Activated T-helper 2 cell treated with anti-CD3 and anti-CD28 coated beads, Interferon-gamma antibody, Interleukin-2, Interleukin-4, amounts not matched to agents 10 μg/mL and 5 μg/mL and 100 μg/mL, durations not matched to agents 14 hours and 24 hours and 36 hours (primary cell): ENCODE measurements at regions of chr11 and their contacts with region 1.

Region 1: GRCh38 chr11:86740709-86741483 is 59.4 kb upstream of the PRSS23 start:
- DNase-seq: no peak
- H3K4me3 Mint-ChIP-seq: no peak overlapping the region
- H3K27ac Mint-ChIP-seq: no peak overlapping the region
- H3K4me1 Mint-ChIP-seq: peaks cover 27% of the 10 kb centered on the region
- H3K27me3 Mint-ChIP-seq: no peaks in the 10 kb centered on the region

Region 2: DNA sequence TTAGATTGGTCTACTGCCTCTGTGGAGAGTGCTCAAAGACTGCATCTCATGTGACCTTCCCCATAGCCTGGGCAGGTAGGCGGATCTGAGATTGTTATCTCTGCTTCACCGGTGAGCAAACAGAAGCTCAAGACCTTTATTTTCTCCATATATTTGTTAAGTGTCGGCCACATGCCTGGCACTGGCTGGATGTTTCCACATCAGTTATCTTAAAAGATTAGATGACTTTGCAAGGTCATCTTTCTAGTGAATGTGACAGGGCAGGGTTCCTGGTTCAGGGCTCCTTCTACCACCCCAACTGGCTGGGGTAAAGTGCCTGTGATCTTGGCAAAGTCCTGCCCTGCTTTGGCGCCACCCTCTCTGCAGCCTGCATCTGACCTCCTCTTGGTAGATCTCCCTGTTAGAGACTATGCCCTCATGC is 241.2 kb before region 1 on chr11:
- intact Hi-C with region 1: loop called (anchors 5 kb)
- DNase-seq: no peak
- H3K4me3 Mint-ChIP-seq: no peak overlapping the region
- H3K27ac Mint-ChIP-seq: no peak overlapping the region
- H3K4me1 Mint-ChIP-seq: peaks cover 11% of the 10 kb centered on the region
- H3K27me3 Mint-ChIP-seq: peaks cover 4% of the 10 kb centered on the region

Region 3: DNA sequence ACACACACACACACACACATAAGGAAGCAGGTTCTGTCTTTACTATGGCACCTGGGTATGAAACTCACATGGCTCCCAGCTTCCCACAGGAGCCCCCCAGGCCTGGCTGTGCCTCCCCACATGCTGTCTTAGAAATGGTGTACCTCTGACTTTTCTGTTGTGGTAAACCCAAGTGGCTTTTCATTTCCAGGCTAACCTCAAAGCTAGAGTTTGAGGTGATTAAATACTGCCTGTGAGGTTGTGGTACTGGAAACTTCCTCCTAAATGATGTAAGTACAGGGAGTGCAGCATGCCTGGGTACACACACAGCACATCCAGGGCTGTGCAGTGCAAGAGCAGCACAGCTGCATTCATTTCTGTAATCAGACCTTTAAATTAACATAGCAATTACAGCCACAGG is 102.9 kb before region 1 on chr11:
- intact Hi-C with region 1: loop called (anchors 5 kb)
- DNase-seq: no peak
- H3K4me3 Mint-ChIP-seq: no peak overlapping the region
- H3K27ac Mint-ChIP-seq: no peak overlapping the region
- H3K4me1 Mint-ChIP-seq: peaks cover 21% of the 10 kb centered on the region
- H3K27me3 Mint-ChIP-seq: peaks cover 41% of the 10 kb centered on the region

Region 4: DNA sequence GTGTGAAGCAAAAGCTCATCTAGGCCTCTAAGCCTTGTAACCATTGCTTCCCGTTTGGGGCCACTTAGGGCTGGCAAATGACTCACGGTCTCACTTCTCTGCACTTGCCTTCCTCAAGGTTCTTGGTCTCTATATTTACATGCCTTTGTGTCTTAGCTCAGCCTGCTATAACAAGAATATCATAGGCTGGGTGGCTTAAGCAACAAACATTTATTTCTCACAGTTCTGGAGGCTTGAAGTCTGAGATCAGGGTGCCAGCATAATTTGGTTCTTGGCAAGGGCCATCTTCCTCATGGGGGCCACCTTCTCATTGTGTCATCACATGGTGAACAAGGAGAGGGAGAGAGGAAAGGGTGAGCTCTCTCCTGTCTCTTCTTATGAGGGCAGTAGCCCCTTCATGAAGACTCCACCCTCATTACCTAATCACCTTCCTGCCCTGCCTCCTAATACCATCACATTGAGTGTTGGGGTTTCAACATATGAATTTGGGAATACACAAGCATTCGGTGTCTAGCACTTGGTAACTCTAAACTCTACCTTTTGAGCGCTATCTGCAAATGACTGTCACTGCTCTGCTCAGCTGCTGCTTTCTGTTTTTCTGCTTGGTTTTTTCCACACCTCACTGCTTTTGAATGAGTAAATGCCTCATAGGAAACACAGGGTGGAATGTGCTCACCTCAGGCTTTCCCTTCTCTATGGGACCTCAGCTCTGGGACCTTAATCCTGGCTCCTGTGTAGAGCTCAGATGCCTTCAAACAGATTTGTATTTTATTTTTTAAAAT is 52.3 kb before region 1 on chr11:
- intact Hi-C with region 1: loop called (anchors 1 kb)
- DNase-seq: no peak
- H3K4me3 Mint-ChIP-seq: peak overlapping the region; percentile 61
- H3K27ac Mint-ChIP-seq: peak overlapping the region; percentile 92
- H3K4me1 Mint-ChIP-seq: peaks cover 24% of the 10 kb centered on the region
- H3K27me3 Mint-ChIP-seq: peaks cover 6% of the 10 kb centered on the region

Region 5: DNA sequence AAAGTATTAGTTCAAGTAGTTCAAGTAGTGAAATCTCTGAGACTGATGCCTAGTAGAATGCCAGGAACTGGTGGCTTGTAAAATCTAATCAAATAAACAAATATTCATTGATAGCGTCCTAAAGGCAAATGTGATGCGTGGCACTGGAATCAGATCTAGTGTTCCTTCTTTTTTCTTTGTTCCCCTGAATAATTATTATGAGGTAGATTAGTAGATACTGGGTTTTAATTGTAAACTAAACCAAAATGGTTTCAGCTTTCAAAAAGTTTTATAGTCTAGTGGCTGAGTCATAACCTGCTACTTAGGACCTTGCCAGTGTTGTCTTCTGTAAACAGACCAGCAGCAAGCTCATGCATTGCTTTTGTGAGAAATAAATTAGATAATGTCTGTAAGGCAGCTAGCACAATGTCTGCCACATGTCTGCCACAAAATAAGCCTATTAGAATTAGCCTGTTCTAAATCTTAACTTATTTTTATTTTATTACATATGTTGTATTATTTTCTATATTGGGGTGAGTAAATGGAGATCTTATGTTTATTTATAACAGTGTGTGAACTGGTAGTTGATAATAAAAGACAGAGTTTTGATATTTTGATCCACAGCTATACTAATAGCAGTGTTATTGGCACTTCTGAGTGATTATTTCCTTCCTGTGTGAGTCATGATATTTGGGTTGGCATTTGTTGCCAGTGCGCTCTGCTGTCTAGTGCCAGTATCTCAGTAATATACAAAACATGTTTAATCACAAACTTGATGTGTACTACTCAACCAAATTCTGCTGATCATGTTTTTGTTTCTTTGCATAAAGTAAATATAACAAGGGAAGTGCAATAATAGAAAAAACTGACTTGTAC is 432.5 kb after region 1 on chr11:
- intact Hi-C with region 1: no loop called
- DNase-seq: no peak
- H3K4me3 Mint-ChIP-seq: no peak overlapping the region
- H3K27ac Mint-ChIP-seq: no peak overlapping the region
- H3K4me1 Mint-ChIP-seq: peaks cover 6% of the 10 kb centered on the region
- H3K27me3 Mint-ChIP-seq: no peaks in the 10 kb centered on the region